Head of caudate nucleus (tissue), 42 donors: ENCODE measurements at regions of chr11 and their contacts with region 1.

Region 1: GRCh38 chr11:68370211-68371111 is 58.1 kb downstream of the LRP5 start:
- DNase-seq: peak in 4 of 42 donors; percentile 17 to 34 (median 30)

Region 2: DNA sequence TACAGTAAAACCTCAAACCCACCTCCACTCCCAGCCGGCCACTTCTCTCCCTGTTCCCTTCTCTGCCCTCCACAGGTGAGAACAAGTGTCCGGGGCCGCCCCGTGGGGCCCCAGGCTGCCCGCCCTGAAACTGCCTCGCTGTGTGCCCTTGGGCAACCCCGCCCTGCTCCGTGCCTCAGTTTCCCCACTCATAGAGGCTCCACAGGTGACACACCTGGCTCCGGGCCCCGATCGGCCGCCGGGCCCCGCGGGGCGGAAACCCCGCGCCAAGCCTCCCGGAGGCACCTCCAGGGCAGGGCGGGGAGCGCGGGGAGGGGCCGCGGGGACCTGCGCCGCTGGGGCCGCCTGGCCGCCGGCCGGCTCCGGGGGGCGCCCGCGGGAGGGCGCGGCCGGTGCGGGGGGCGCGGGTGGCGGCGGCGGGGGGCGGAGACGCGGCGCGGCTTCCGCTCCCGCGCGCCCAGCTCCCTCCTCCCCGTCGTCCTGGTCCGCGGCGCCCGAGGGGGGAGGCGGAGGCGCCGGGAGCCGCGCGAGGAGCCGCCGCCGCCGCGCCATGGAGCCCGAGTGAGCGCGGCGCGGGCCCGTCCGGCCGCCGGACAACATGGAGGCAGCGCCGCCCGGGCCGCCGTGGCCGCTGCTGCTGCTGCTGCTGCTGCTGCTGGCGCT is 58.2 kb before region 1 on chr11 and contains the start of gene LRP5:
- intact Hi-C with region 1: loop called (anchors 10 kb)
- DNase-seq: peak in 3 of 42 donors; percentile 24 to 40 (median 36)

Region 3: DNA sequence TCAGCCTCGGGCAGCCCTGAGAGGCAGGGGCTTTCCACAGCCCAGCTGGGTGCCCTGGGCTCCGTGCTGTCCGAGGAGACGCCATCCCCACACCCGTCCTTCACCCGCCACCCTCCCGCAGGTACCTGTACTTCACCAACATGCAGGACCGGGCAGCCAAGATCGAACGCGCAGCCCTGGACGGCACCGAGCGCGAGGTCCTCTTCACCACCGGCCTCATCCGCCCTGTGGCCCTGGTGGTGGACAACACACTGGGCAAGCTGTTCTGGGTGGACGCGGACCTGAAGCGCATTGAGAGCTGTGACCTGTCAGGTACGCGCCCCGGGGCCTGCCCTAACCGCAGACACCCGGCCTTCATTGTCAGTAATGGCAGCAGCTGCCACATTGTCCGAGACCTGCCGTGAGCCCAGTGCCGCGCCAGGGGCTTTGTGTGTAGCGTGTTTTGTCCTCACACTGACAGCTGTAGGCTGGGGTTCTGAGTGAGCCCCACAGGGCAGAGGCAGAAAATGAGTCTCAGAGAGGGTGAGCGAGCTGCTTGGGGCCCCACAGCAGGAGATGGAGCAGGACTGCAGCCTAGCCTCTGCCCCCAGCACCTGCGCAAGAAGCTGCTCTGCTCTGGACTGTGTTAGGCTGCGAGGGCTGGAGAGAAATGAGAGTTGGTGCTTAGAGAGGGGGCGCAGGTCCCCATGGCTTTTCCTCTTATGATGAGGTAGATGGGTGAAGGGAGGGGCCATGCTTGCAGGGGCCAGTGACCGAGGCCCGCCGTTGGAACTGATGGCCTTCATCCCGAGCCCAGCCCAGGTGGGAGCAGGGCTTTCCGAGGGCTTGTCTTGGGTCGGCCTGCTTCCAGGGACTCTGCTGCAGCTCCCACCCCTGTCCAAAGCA is 54.8 kb after region 1 on chr11:
- intact Hi-C with region 1: no loop called
- DNase-seq: no peak